ENCODE measurements at regions of chr4 and their contacts with region 1.

Region 1: DNA sequence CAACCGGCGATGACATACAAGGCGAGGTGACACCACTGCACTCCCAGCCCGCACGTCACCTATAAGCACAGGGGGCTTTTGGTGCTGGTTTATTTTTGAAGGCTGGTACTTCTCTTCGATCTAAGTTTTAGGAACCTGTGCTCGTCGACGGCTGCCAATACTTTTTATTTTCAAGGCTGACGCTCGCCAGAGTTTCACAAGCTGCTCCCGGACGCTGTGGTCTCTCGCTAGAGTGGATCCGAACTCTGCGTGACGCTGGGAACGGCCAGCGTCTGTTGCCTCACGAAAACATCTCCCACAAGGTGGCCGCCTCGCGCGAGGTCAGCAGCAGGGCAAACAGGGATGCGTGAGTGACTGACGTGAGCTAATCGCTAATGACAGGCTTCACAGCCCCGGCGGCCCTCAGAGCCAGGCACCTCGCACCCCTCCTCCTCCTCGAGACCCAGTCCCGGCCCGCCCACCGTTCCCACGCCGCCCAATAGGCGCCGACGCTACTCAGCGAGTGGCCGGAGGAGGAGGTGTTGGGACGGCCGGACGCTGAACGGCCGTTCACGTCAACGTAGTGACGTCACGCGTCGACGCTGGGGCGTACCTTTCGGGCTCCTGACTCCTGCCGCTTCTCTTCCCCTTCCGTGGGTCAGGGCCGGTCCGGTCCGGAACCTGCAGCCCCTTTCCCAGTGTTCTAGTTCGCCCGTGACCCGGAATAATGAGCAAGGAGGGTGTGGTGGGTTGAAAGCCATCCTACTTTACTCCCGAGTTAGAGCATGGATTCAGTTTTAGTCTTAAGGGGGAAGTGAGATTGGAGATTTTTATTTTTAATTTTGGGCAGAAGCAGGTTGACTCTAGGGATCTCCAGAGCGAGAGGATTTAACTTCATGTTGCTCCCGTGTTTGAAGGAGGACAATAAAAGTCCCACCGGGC is at the start of gene CLCN3:
- DNase-seq: peak; percentile 98
- ATAC-seq: peak; percentile 90 to 91
- H3K4me3 ChIP-seq: peak within 1 kb of the TSS; percentile 73 to 81 (median 80)
- H3K27ac ChIP-seq: peak within 1 kb of the TSS; percentile 94 to 99 (median 95)
- H3K4me1 ChIP-seq: peaks cover 10 to 22% of the 10 kb centered on the region in 2 donors
- H3K27me3 ChIP-seq: no peaks in the 10 kb centered on the region
- CTCF ChIP-seq: peak in 2 of 5 experiments; percentile 10 to 34
- POLR2A ChIP-seq: peak; percentile 91 to 95
- total RNA-seq, gene CLCN3: 18.7 to 24.8 (median 20.5) TPM

Region 2: DNA sequence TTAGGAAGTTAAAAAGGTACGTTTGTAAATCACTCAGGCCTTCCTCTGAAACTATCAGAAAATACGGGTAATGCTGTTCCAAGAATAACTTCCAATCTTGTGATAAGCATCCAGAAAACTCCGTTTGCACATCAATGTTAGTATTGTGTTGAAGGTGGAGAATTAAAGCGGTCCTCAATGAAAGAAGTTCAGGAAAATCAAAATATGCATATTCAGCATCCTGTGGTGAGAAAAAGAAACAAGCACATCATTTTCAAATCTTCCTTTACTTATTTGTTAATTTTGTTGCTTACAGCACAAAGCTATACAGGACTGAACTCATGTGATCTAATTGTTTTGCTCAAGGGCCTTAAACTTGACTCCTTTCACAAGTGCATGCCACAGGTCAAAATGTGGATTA is 1158.4 kb before region 1 on chr4:
- in situ Hi-C with region 1: no loop called
- intact Hi-C with region 1: no loop called
- DNase-seq: no peak
- ATAC-seq: no peak
- H3K4me3 ChIP-seq: no peak overlapping the region
- H3K27ac ChIP-seq: no peak overlapping the region
- H3K4me1 ChIP-seq: no peaks in the 10 kb centered on the region
- H3K27me3 ChIP-seq: no peaks in the 10 kb centered on the region
- CTCF ChIP-seq: no peak
- POLR2A ChIP-seq: no peak

Region 3: DNA sequence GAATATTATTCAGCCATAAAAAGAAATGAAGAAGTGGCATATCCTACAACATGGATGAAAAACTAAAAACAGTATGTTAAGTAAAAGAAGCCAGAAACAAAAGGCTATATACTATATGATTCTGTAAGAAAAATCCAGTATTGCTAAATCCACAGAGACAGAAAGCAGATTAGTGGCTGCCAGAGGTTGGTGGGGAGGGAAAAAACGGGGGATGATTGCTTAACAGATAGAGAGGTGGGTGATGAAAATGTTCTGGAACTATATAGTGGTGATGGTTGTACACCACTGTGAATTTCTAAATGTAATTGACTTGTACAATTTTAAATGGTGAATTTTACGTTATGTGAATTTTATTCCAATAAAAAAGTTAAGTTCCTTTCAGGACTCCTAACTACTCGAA is 191.8 kb before region 1 on chr4:
- in situ Hi-C with region 1: no loop called
- intact Hi-C with region 1: no loop called
- DNase-seq: no peak
- ATAC-seq: no peak
- H3K4me3 ChIP-seq: no peak overlapping the region
- H3K27ac ChIP-seq: no peak overlapping the region
- H3K4me1 ChIP-seq: no peaks in the 10 kb centered on the region
- H3K27me3 ChIP-seq: no peaks in the 10 kb centered on the region
- CTCF ChIP-seq: no peak
- POLR2A ChIP-seq: no peak

Region 4: GRCh38 chr4:169659716-169660670 is 39.8 kb after region 1 on chr4:
- in situ Hi-C with region 1: loop called in 1 of 4 experiments (anchors 5 kb)
- intact Hi-C with region 1: loop called (anchors 1 kb)
- DNase-seq: peak; percentile 67 to 77
- ATAC-seq: peak; percentile 98 to 99
- H3K4me3 ChIP-seq: peak overlapping the region; percentile 49 to 61 (median 56)
- H3K27ac ChIP-seq: peak overlapping the region; percentile 79 to 85 (median 80)
- H3K4me1 ChIP-seq: peaks cover 35 to 55% of the 10 kb centered on the region in 2 donors
- H3K27me3 ChIP-seq: no peaks in the 10 kb centered on the region
- CTCF ChIP-seq: no peak
- POLR2A ChIP-seq: peak; percentile 14 to 42

Region 5: GRCh38 chr4:169723207-169723965 is 103.2 kb after region 1 on chr4:
- in situ Hi-C with region 1: loop called in 1 of 4 experiments (anchors 25 kb)
- intact Hi-C with region 1: no loop called
- DNase-seq: no peak
- ATAC-seq: no peak
- H3K4me3 ChIP-seq: no peak overlapping the region
- H3K27ac ChIP-seq: no peak overlapping the region
- H3K4me1 ChIP-seq: no peaks in the 10 kb centered on the region
- H3K27me3 ChIP-seq: no peaks in the 10 kb centered on the region
- CTCF ChIP-seq: no peak
- POLR2A ChIP-seq: no peak

Region 6: DNA sequence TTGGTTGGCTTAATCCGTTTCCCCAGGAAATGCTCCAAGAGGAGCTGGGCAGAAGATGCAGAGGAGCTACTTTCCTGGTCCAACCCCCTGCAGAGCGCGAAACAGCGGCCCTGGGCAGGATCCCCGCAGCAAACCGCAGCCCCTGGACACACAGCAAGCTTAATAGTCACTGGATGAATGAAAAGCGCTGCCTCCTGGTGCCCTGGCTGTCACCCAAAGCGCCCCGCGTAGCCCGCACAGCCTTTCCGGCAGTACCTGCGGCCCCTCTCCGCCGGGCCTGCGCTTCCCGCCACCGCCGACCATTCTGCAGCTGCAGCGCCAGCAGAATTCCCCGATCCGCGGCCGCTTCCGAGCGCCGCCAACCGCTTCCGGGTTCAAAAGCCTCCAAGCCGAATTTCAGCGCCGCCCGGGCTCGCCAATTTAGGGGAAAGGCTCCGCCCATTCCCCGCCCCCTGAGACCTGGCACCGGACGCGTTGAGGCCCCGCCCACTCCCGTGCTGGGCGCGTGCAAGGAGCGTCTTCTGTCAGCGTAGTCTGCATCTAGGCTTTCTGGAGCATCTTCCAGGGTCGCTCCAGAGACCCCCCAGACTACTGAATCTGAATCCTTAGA is 137.5 kb after region 1 on chr4 and contains the start of gene HPF1:
- in situ Hi-C with region 1: loop called in 1 of 4 experiments (anchors 10 kb)
- intact Hi-C with region 1: no loop called
- DNase-seq: peak; percentile 84 to 88
- ATAC-seq: peak; percentile 96 to 97
- H3K4me3 ChIP-seq: peak within 1 kb of the TSS; percentile 78 to 100 (median 88)
- H3K27ac ChIP-seq: peak within 1 kb of the TSS; percentile 63 to 81 (median 73)
- H3K4me1 ChIP-seq: peaks cover 16 to 17% of the 10 kb centered on the region in 2 donors
- H3K27me3 ChIP-seq: no peaks in the 10 kb centered on the region
- CTCF ChIP-seq: peak in 1 of 5 experiments; percentile 15
- POLR2A ChIP-seq: peak; percentile 35 to 54
- total RNA-seq, gene HPF1: 18.4 to 51.8 (median 28.4) TPM

Region 7: DNA sequence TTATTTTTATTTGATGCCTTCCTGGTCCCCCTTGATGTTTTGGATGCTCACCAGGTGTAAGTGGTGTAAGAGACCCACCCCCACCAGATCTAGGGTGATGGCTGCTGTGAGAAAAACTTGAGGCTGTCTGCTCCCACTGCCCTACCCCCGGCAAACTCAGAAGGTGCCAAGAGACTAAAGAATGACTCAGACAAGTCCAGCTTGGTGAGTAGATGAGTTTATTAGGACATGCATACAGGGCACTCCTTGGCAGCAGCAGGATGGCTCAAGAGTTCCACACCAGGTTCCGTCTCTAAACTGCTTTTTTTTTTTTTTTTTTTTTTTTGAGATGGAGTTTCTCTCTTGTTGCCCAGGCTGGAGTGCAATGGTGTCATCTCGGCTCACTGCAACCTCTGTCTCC is 221.6 kb after region 1 on chr4:
- in situ Hi-C with region 1: no loop called
- intact Hi-C with region 1: no loop called
- DNase-seq: no peak
- ATAC-seq: no peak
- H3K4me3 ChIP-seq: no peak overlapping the region
- H3K27ac ChIP-seq: no peak overlapping the region
- H3K4me1 ChIP-seq: no peaks in the 10 kb centered on the region
- H3K27me3 ChIP-seq: no peaks in the 10 kb centered on the region
- CTCF ChIP-seq: no peak
- POLR2A ChIP-seq: no peak

Region 8: DNA sequence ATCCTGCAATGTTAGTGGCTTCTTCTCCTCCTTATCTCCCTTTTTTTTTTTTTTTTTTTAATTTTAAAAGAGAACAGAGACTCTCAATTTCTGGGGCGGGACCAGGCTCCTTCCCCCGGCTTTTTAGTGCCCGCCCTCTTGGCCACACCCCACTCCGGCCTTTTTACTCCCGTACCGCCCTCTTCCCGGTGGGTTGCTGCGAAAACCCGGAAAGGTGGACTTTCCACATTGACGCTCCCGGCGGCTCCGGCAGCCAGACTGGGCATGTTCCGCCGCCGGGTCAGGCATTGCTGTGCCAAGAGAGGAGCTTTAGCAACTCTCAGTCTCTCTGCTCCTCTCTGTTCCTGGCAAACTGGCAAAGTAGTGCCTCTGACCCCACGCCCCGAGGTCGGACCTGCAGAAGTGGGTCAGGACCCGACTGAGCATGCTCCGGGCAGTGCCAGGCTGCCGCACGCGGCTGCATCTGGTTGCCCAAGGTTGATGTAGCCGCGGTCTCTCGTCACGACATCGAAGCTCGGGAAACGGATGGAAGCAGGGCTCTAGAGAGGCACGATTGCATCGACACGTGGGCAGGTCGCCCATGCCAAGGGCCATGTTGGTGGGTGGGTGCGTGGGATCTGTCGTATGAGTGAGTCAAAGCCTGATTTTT is 407.1 kb after region 1 on chr4:
- in situ Hi-C with region 1: loop called in 3 of 4 experiments (anchors 25 kb)
- intact Hi-C with region 1: no loop called
- DNase-seq: peak; percentile 88 to 90
- ATAC-seq: peak; percentile 88 to 90
- H3K4me3 ChIP-seq: peak overlapping the region; percentile 74 to 91 (median 88)
- H3K27ac ChIP-seq: peak overlapping the region; percentile 90 to 93 (median 92)
- H3K4me1 ChIP-seq: peaks cover 8 to 18% of the 10 kb centered on the region in 2 donors
- H3K27me3 ChIP-seq: no peaks in the 10 kb centered on the region
- CTCF ChIP-seq: peak in 2 of 5 experiments; percentile 18 to 21
- POLR2A ChIP-seq: no peak

Region 9: DNA sequence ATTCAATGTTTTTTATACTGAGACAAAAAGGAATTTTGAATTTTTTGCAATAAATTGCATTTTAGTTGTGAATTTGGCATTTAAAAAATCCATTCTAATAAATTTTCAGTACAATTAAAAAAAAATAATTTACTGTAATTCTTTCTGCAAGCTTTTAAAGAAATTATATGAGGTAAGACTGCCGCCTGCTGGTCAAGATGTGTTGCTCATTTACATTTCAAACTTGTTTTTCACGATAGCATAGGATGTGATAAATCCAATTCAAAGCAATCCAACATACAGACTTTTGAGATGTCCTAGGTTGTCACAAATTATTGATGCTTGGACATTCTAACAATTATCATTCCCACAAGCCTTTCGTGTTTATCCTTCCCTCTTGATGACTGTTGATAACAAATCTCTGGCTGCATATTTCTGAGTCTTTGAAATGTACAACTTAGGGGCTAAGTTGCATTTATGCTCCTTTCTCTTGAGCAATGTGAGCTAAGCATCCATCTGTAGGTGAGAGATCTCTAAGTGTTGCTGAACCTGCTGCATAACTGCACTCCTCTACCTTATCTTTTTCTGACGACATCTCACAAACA is 427.6 kb after region 1 on chr4:
- in situ Hi-C with region 1: loop called (anchors 10 to 25 kb)
- intact Hi-C with region 1: no loop called
- DNase-seq: peak in 1 of 2 donors; percentile 15
- ATAC-seq: no peak
- H3K4me3 ChIP-seq: no peak overlapping the region
- H3K27ac ChIP-seq: no peak overlapping the region
- H3K4me1 ChIP-seq: no peaks in the 10 kb centered on the region
- H3K27me3 ChIP-seq: no peaks in the 10 kb centered on the region
- CTCF ChIP-seq: peak; percentile 67 to 80 (median 71)
- POLR2A ChIP-seq: no peak